ENCODE measurements at regions of chr1 and their contacts with region 1.

Region 1: GRCh38 chr1:205485338-205486228 is 18.9 kb upstream of the CDK18 start:
- DNase-seq: peak; percentile 39 to 88 (median 68)
- ATAC-seq: peak; percentile 65
- H3K4me3 ChIP-seq: no peak overlapping the region
- H3K4me3 Mint-ChIP-seq: no peak overlapping the region
- H3K27ac ChIP-seq: no peak overlapping the region
- H3K27ac Mint-ChIP-seq: no peak overlapping the region
- H3K4me1 ChIP-seq: peaks cover 19% of the 10 kb centered on the region
- H3K4me1 Mint-ChIP-seq: peaks cover 39% of the 10 kb centered on the region
- H3K27me3 ChIP-seq: no peaks in the 10 kb centered on the region
- H3K27me3 Mint-ChIP-seq: peaks cover 32% of the 10 kb centered on the region
- CTCF ChIP-seq: peak; percentile 81

Region 2: DNA sequence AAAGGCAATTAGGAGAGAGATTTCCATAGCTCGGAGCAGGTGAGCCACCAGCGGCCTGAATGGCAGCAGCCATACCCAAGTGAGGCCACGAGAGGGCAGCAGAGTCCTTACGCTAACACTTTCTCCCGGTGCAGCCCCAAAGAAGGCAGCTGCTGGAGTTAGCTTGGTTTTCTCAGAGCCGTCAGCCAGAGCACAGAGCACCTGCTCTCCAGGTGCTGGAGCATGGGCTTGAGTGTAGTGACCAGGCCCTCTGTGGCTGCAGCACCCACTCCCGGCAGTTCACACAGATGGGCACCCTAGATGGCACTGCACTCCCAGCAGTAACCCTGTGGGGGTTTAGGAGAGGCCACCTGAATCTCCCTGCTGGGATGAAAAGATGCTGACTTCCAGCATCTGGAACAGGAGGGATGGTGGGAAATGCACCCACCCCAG is 212.0 kb before region 1 on chr1:
- CTCF ChIA-PET with region 1: interaction called, 72 read pairs
- POLR2A ChIA-PET with region 1: no interaction called
- intact Hi-C with region 1: loop called (anchors 1 kb)
- DNase-seq: peak; percentile 76 to 94 (median 86)
- ATAC-seq: peak; percentile 88
- H3K4me3 ChIP-seq: peak overlapping the region in 1 of 2 experiments; percentile 44
- H3K4me3 Mint-ChIP-seq: peak overlapping the region; percentile 61
- H3K27ac ChIP-seq: no peak overlapping the region
- H3K27ac Mint-ChIP-seq: peak overlapping the region; percentile 83
- H3K4me1 ChIP-seq: peaks cover 46% of the 10 kb centered on the region
- H3K4me1 Mint-ChIP-seq: peaks cover 40% of the 10 kb centered on the region
- H3K27me3 ChIP-seq: no peaks in the 10 kb centered on the region
- H3K27me3 Mint-ChIP-seq: no peaks in the 10 kb centered on the region
- CTCF ChIP-seq: peak; percentile 95

Region 3: GRCh38 chr1:205346956-205347576 is 138.5 kb before region 1 on chr1:
- CTCF ChIA-PET with region 1: interaction called, 34 read pairs
- POLR2A ChIA-PET with region 1: no interaction called
- intact Hi-C with region 1: no loop called
- DNase-seq: no peak
- ATAC-seq: no peak
- H3K4me3 ChIP-seq: no peak overlapping the region
- H3K4me3 Mint-ChIP-seq: no peak overlapping the region
- H3K27ac ChIP-seq: no peak overlapping the region
- H3K27ac Mint-ChIP-seq: no peak overlapping the region
- H3K4me1 ChIP-seq: peaks cover 13% of the 10 kb centered on the region
- H3K4me1 Mint-ChIP-seq: peaks cover 10% of the 10 kb centered on the region
- H3K27me3 ChIP-seq: peaks cover 14 to 17% of the 10 kb centered on the region in 2 experiments
- H3K27me3 Mint-ChIP-seq: peaks cover 46% of the 10 kb centered on the region
- CTCF ChIP-seq: no peak

Region 4: GRCh38 chr1:205396967-205397616 is 88.5 kb before region 1 on chr1:
- CTCF ChIA-PET with region 1: interaction called, 106 read pairs
- POLR2A ChIA-PET with region 1: interaction called, 11 read pairs
- intact Hi-C with region 1: loop called in 1 of 2 experiments (anchors 1 kb)
- DNase-seq: peak in 3 of 9 experiments; percentile 8 to 70 (median 59)
- ATAC-seq: peak; percentile 74
- H3K4me3 ChIP-seq: no peak overlapping the region
- H3K4me3 Mint-ChIP-seq: no peak overlapping the region
- H3K27ac ChIP-seq: no peak overlapping the region
- H3K27ac Mint-ChIP-seq: no peak overlapping the region
- H3K4me1 ChIP-seq: no peaks in the 10 kb centered on the region
- H3K4me1 Mint-ChIP-seq: peaks cover 3% of the 10 kb centered on the region
- H3K27me3 ChIP-seq: peaks cover 0 to 5% of the 10 kb centered on the region in 2 experiments
- H3K27me3 Mint-ChIP-seq: peaks cover 13% of the 10 kb centered on the region
- CTCF ChIP-seq: peak; percentile 85

Region 5: DNA sequence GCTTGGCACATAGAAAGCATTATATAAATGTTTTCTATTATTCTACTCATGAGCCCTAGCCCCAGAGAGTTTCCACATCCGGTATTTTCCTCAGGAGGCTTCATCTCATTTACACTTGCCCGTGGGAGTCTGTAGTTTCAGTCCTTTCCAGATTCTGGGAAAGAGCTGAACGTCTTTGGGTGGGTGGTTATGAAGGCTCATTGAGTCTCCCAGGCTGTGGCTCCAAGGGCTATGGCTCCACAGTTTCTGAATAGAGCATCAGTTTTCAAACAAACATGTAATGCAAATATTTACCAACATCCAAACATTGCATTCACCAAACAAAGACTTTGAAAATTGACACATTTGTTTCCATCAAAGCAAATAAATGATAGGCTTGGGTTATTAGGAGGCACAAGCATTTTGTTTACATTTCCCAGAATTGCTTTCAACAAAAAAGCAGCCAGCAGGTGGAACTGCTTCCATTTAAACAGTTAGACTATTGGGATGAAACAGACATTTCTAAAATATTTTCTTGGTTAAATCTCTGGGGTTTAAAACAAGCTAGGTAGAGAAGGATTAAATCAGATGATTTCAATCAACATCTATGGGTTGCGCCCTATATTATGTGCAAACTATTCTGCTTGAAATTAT is 62.5 kb before region 1 on chr1:
- CTCF ChIA-PET with region 1: interaction called, 43 read pairs
- POLR2A ChIA-PET with region 1: no interaction called
- intact Hi-C with region 1: loop called in 1 of 2 experiments (anchors 2 kb)
- DNase-seq: no peak
- ATAC-seq: no peak
- H3K4me3 ChIP-seq: no peak overlapping the region
- H3K4me3 Mint-ChIP-seq: no peak overlapping the region
- H3K27ac ChIP-seq: no peak overlapping the region
- H3K27ac Mint-ChIP-seq: no peak overlapping the region
- H3K4me1 ChIP-seq: no peaks in the 10 kb centered on the region
- H3K4me1 Mint-ChIP-seq: no peaks in the 10 kb centered on the region
- H3K27me3 ChIP-seq: no peaks in the 10 kb centered on the region
- H3K27me3 Mint-ChIP-seq: peaks cover 7% of the 10 kb centered on the region
- CTCF ChIP-seq: no peak

Region 6: GRCh38 chr1:205458777-205459566 is 26.6 kb before region 1 on chr1:
- CTCF ChIA-PET with region 1: interaction called, 16 read pairs
- POLR2A ChIA-PET with region 1: interaction called, 3 read pairs
- intact Hi-C with region 1: no loop called
- DNase-seq: peak in 7 of 9 experiments; percentile 9 to 59 (median 49)
- ATAC-seq: peak; percentile 73
- H3K4me3 ChIP-seq: no peak overlapping the region
- H3K4me3 Mint-ChIP-seq: no peak overlapping the region
- H3K27ac ChIP-seq: no peak overlapping the region
- H3K27ac Mint-ChIP-seq: no peak overlapping the region
- H3K4me1 ChIP-seq: peaks cover 17% of the 10 kb centered on the region
- H3K4me1 Mint-ChIP-seq: peaks cover 12% of the 10 kb centered on the region
- H3K27me3 ChIP-seq: peaks cover 30 to 31% of the 10 kb centered on the region in 2 experiments
- H3K27me3 Mint-ChIP-seq: peaks cover 47% of the 10 kb centered on the region
- CTCF ChIP-seq: no peak

Region 7: GRCh38 chr1:205528887-205529825 is 43.6 kb after region 1 on chr1:
- CTCF ChIA-PET with region 1: interaction called, 366 read pairs
- POLR2A ChIA-PET with region 1: interaction called, 13 read pairs
- intact Hi-C with region 1: loop called in 1 of 2 experiments (anchors 1 kb)
- DNase-seq: peak; percentile 68 to 92 (median 80)
- ATAC-seq: peak; percentile 90
- H3K4me3 ChIP-seq: peak overlapping the region in 1 of 2 experiments; percentile 26
- H3K4me3 Mint-ChIP-seq: peak overlapping the region; percentile 58
- H3K27ac ChIP-seq: no peak overlapping the region
- H3K27ac Mint-ChIP-seq: no peak overlapping the region
- H3K4me1 ChIP-seq: no peaks in the 10 kb centered on the region
- H3K4me1 Mint-ChIP-seq: peaks cover 5% of the 10 kb centered on the region
- H3K27me3 ChIP-seq: no peaks in the 10 kb centered on the region
- H3K27me3 Mint-ChIP-seq: no peaks in the 10 kb centered on the region
- CTCF ChIP-seq: peak; percentile 90

Measured in CD8-positive, alpha-beta T cell (primary cell).